Sigmoid colon (tissue), 7 donors: ENCODE measurements at regions of chr6 and their contacts with region 1.

Region 1: DNA sequence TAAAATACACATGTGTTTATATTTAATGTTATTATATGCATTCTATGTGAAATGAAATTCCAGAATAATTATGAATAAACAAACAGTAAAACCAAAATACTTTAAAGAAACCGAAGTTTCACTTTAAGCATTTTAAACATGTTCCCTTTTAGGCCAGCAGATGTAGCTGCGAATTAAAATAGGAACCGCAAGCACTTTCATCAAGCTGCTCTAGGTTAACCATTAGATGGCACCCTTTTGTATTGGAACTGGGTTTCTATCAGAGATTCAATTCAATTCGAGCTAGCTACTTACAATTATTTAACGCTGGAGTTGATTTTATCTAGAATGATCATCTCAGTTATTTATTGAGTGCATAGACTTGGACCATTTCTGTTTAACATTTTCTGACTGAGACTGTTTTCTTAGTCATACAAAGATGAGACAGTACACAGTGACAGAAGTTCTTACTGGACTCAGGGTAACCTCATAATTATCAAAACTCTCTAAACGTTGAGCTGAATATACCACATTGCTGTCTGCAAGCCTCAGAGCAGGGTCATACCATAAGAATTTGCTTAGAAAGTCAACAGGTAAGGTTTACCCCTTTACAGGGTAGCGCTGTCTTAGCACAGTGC is 8.5 kb downstream of the TMEM242 start:
- DNase-seq: no peak
- H3K4me3 ChIP-seq: no peak overlapping the region
- H3K27ac ChIP-seq: no peak overlapping the region
- H3K4me1 ChIP-seq: peaks cover 0 to 16% (median 10%) of the 10 kb centered on the region in 4 donors
- H3K27me3 ChIP-seq: no peaks in the 10 kb centered on the region
- CTCF ChIP-seq: peak; percentile 44 to 75 (median 57)
- EP300 ChIP-seq: no peak
- POLR2A ChIP-seq: no peak

Region 2: GRCh38 chr6:157946865-157947532 is 632.2 kb after region 1 on chr6:
- intact Hi-C with region 1: loop called (anchors 10 kb)
- DNase-seq: no peak
- H3K4me3 ChIP-seq: no peak overlapping the region
- H3K27ac ChIP-seq: no peak overlapping the region
- H3K4me1 ChIP-seq: no peaks in the 10 kb centered on the region
- H3K27me3 ChIP-seq: no peaks in the 10 kb centered on the region
- CTCF ChIP-seq: peak in 3 of 4 experiments; percentile 18 to 37 (median 24)
- EP300 ChIP-seq: no peak
- POLR2A ChIP-seq: no peak